Gastrocnemius medialis (tissue), 4 donors: ENCODE measurements at regions of chr4 and their contacts with region 1.

Region 1: DNA sequence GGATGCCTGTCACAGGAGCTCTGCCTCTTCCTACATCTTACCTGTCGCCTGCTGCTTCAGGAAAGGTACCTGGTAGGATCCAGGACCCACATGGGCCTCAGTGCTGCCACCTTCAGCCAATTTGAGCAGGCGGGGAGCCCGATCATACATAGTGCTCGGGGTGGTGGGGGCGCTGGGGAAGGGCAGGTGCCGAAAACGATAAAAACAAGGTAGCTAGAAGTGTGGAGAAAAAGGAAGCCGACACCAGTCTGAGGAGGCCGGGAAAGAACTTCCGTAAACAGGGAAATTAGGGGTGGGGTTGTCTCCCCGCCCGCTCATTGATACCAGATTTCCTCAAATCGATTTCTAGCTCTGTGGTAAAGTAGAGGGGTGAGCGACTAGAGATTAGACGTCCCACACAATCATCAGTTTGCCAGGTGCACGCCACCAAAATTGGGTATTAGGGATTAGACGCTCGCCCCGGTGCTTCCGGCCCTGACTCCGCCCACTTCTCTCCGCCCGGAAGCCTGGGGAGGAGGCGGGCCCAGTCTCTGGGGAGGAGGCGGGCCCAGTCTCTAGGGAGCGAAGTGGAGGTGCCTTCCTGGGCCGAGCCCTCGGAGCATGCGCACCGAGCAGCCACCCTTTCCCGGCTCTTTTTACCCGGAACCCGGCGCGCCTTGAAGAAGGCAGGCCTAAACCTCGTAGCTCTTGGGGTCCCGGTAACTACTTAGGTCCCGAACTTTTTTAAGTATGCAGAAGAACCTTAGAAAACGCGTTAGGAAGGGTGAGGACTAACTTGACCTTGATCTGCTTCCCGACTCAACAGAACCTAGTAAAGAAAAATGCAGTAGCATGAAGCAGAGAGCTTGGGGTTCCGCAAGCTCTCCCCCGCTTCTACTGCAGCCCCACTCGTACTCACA is at the start of gene STPG2:
- DNase-seq: peak; percentile 84 to 87
- ATAC-seq: peak; percentile 97 to 99
- H3K4me3 ChIP-seq: peak within 1 kb of the TSS; percentile 58 to 73 (median 71)
- H3K27ac ChIP-seq: peak within 1 kb of the TSS; percentile 77 to 85 (median 78)
- H3K4me1 ChIP-seq: peaks cover 0 to 11% of the 10 kb centered on the region in 2 donors
- H3K27me3 ChIP-seq: peaks cover 0 to 3% (median 0%) of the 10 kb centered on the region in 3 donors
- CTCF ChIP-seq: peak in 2 of 5 experiments; percentile 39 to 47
- POLR2A ChIP-seq: peak; percentile 14 to 37
- total RNA-seq, gene STPG2: 0.42 TPM in 1 of 4 donors, not detected in the others

Region 2: DNA sequence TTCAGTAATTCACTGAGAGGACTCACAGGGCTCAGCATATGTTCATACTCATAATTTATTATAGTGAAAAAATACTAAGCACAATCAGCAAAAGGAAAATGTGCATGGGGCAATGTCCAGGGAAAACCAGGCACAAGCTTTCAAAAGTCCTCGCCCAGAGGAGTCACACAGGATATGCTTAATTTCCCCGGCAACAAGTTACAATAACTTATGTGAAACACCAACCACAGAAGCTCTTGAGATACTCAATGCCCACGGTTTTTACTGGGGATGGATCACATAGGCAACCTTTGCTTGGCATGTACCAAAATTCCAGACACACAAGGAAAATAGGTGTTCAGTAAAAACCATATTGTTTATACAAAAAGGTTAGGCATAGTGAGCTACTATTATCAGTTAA is 38.6 kb after region 1 on chr4:
- in situ Hi-C with region 1: no loop called
- intact Hi-C with region 1: no loop called
- DNase-seq: no peak
- ATAC-seq: no peak
- H3K4me3 ChIP-seq: no peak overlapping the region
- H3K27ac ChIP-seq: no peak overlapping the region
- H3K4me1 ChIP-seq: no peaks in the 10 kb centered on the region
- H3K27me3 ChIP-seq: no peaks in the 10 kb centered on the region
- CTCF ChIP-seq: no peak
- POLR2A ChIP-seq: no peak

Region 3: DNA sequence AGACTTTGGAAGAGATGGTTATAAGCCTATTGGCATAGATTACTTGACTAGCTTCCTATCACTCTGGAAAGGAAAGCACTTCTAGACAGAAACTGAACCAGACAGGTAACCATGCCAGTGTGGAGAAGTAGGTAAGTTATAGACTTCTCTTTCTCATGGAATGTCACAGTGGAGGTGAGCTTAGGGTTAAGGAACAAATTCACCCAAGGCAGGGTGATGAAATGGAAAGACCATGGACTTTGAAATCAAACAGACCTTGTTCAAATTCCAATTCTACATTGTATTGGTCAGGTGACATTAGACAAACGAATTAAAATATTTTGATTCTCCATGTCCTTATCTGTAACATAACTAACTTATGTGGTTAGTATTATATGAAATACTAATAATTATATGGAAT is 110.2 kb after region 1 on chr4:
- in situ Hi-C with region 1: loop called in 1 of 4 experiments (anchors 10 kb)
- intact Hi-C with region 1: no loop called
- DNase-seq: no peak
- ATAC-seq: no peak
- H3K4me3 ChIP-seq: no peak overlapping the region
- H3K27ac ChIP-seq: no peak overlapping the region
- H3K4me1 ChIP-seq: no peaks in the 10 kb centered on the region
- H3K27me3 ChIP-seq: no peaks in the 10 kb centered on the region
- CTCF ChIP-seq: no peak
- POLR2A ChIP-seq: no peak